ENCODE measurements at regions of chr10 and their contacts with region 1.

Region 1: DNA sequence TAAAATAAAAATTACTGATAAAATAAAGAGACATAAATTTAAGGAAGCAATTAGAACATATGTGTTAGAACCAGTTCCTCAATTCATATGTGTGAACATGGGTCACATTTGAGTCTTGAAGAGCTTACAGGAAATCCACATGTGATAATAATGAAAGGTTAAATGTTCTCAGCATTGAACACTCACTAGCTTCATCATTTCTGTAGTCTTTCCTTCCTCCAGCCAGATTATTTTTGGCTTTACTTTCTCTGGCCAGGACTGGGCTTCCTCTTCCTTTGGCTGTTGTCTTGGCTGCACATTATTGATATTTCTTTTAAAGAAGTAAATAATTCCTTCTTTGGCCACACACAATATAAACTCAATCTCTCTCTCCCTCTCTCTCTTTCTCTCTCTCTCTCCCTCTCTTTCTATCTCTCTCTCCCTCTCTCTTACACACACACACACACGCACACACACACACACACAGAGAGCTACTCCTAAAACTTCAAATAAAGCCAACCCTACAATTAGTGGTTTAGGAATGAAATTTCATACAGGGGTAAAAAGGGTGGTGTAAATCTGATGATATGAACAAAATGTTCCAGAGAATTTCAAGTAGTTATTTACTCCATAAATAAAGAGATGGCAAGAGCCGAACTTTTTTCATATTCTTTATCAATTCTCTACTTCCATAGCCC is 171.2 kb downstream of the REEP3 start:
- DNase-seq: no peak
- H3K4me3 Mint-ChIP-seq: no peak overlapping the region
- H3K27ac Mint-ChIP-seq: no peak overlapping the region
- H3K4me1 Mint-ChIP-seq: peaks cover 2% of the 10 kb centered on the region
- H3K27me3 Mint-ChIP-seq: peaks cover 2% of the 10 kb centered on the region

Region 2: GRCh38 chr10:63667596-63668480 is 24.5 kb before region 1 on chr10:
- CTCF ChIA-PET with region 1: no interaction called
- POLR2A ChIA-PET with region 1: interaction called, 10 read pairs
- DNase-seq: no peak
- H3K4me3 Mint-ChIP-seq: no peak overlapping the region
- H3K27ac Mint-ChIP-seq: no peak overlapping the region
- H3K4me1 Mint-ChIP-seq: peaks cover 3% of the 10 kb centered on the region
- H3K27me3 Mint-ChIP-seq: peaks cover 15% of the 10 kb centered on the region

Measured in activated CD4-positive, alpha-beta T cell treated with anti-CD3 and anti-CD28 coated beads, Interleukin-2, amount 10 ng/mL, durations not matched to agents 7 days and 5 days (primary cell).